Prostate gland (tissue), 2 donors: ENCODE measurements at regions of chr1 and their contacts with region 1.

Region 1: DNA sequence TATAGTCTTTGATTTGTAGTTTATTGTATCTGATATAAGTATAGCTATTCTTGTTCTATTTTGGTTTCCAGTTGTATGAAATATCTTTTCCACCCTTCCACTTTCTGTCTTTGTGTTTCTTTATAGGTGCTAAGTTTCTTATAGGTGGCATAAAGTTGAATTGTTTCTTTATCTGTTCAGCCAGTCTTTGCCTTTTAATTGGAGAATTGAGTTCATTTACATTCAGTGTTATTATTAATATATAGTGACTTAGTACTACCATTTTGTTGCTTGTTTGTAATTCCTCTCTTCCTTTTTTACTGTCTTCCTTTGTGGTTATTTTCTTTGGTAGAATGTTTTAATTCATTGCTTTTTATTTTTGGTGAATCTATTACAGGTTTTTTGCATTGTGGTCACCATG is 77.7 kb downstream of the MAGI3 start:
- DNase-seq: no peak
- H3K4me3 ChIP-seq: no peak overlapping the region
- H3K27ac ChIP-seq: no peak overlapping the region
- H3K4me1 ChIP-seq: no peaks in the 10 kb centered on the region
- H3K27me3 ChIP-seq: no peaks in the 10 kb centered on the region
- CTCF ChIP-seq: no peak
- POLR2A ChIP-seq: no peak

Region 2: DNA sequence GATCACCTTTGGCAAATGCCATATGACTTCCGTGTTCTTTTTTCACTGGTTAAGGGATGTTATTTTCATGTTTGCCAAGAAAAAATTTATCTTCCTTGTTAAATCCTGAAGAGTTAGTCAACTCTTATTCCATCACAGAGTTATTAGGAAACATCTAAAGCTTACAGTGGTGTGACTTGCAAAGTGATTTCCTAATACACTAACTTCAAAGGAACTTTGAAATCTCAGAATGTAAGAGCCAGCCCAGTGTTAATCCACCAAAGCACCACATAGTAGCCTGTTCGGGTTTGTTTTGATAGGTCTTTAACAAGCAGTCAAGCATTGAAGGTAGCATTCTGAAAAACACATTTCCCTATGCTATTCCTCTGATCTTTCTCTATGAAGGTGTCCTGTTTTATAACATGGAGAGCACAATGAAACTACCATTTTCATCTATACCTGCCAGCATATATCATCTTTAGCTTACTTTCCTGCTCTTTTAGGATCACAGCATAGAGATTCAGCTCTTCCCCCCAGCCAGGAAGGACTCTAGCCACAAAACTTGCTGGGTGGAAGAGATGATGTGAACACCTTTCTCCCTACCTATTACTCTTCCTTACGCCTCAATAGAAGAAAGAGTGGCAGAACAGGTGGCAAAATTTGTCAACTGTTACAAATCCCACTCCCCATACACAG is 160.1 kb before region 1 on chr1:
- intact Hi-C with region 1: loop called (anchors 10 kb)
- DNase-seq: no peak
- H3K4me3 ChIP-seq: no peak overlapping the region
- H3K27ac ChIP-seq: no peak overlapping the region
- H3K4me1 ChIP-seq: no peaks in the 10 kb centered on the region
- H3K27me3 ChIP-seq: no peaks in the 10 kb centered on the region
- CTCF ChIP-seq: no peak
- POLR2A ChIP-seq: no peak